Activated T-helper 2 cell treated with anti-CD3 and anti-CD28 coated beads, Interferon-gamma antibody, Interleukin-2, Interleukin-4, amounts not matched to agents 10 μg/mL and 5 μg/mL and 100 μg/mL, durations not matched to agents 14 hours and 24 hours and 36 hours (primary cell): ENCODE measurements at regions of chr11 and their contacts with region 1.

Region 1: GRCh38 chr11:73376160-73376802 is at the start of gene RELT:
- DNase-seq: peak; percentile 93
- H3K4me3 Mint-ChIP-seq: peak within 1 kb of the TSS; percentile 89
- H3K27ac Mint-ChIP-seq: peak within 1 kb of the TSS; percentile 90
- H3K4me1 Mint-ChIP-seq: peaks cover 35% of the 10 kb centered on the region
- H3K27me3 Mint-ChIP-seq: no peaks in the 10 kb centered on the region
- total RNA-seq, gene RELT: 33.5 and 34.5 TPM in 2 replicates

Region 2: GRCh38 chr11:73173755-73174494 is 202.4 kb before region 1 on chr11:
- intact Hi-C with region 1: no loop called
- DNase-seq: no peak
- H3K4me3 Mint-ChIP-seq: no peak overlapping the region
- H3K27ac Mint-ChIP-seq: no peak overlapping the region
- H3K4me1 Mint-ChIP-seq: peaks cover 13% of the 10 kb centered on the region
- H3K27me3 Mint-ChIP-seq: peaks cover 5% of the 10 kb centered on the region

Region 3: DNA sequence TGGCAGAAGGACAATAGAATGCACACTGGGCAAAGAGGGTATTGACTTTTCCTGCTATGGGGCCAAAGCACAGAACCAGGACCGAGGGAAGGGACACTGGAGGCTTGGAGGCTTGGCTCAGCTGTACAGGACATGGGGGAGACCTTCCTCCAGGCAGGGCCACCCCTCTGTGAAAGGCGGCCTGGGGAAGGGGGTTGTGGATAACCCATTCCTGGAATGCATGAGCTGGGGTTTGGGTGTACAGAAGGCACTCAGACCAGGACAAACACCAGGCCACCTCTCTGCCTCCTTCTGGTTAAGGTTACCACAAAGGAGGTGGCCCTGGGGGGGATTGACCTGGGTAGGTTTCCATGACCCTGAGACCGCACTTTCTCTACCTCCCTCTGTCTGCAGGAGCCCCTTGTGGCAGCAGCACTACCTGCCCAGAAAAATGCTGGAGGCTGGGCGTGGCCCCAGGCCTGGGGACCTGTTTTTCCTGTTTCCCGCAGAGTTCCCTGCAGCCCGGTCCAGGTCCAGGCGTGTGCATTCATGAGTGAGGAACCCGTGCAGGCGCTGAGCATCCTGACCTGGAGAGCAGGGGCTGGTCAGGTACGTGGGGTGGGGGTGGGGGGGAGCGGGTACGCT is 148.6 kb before region 1 on chr11:
- intact Hi-C with region 1: no loop called
- DNase-seq: no peak
- H3K4me3 Mint-ChIP-seq: no peak overlapping the region
- H3K27ac Mint-ChIP-seq: no peak overlapping the region
- H3K4me1 Mint-ChIP-seq: peaks cover 3% of the 10 kb centered on the region
- H3K27me3 Mint-ChIP-seq: peaks cover 8% of the 10 kb centered on the region

Region 4: DNA sequence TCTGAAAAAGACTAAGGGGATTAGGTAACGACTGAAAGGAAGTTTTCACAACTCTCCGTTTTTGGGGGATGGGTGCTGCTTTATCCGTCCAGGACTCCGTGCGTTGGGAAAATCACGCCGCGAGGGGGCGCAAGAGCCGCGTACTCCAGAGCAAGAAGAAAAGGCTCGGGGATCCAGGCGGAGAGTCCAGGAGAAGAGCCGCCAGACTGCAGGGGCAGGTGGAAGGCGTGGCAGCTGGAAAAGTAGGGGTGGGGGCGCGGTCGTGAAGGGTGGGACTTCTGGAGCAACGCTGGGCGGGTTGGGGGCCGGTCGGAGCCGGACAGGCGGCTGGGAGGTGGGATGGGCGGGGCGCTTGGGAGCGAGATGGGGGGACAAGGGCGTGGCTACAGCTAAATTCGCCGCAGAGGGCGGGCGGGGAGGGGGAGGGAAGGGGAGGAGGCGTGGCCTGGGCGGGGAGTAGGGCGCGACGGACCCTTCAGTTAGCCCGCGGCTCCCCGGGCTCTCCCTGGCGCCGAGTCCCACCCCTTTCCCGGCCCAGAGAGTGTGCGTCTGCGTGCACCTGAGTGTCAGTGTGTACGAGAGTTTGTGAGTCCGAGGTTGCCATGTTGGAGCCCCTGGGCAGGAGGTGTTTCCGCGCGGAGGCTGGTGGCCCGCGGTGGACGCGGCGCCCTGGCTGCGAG is 68.8 kb before region 1 on chr11:
- intact Hi-C with region 1: loop called (anchors 5 kb)
- DNase-seq: peak; percentile 80
- H3K4me3 Mint-ChIP-seq: peak overlapping the region; percentile 86
- H3K27ac Mint-ChIP-seq: no peak overlapping the region
- H3K4me1 Mint-ChIP-seq: peaks cover 6% of the 10 kb centered on the region
- H3K27me3 Mint-ChIP-seq: peaks cover 47% of the 10 kb centered on the region

Region 5: DNA sequence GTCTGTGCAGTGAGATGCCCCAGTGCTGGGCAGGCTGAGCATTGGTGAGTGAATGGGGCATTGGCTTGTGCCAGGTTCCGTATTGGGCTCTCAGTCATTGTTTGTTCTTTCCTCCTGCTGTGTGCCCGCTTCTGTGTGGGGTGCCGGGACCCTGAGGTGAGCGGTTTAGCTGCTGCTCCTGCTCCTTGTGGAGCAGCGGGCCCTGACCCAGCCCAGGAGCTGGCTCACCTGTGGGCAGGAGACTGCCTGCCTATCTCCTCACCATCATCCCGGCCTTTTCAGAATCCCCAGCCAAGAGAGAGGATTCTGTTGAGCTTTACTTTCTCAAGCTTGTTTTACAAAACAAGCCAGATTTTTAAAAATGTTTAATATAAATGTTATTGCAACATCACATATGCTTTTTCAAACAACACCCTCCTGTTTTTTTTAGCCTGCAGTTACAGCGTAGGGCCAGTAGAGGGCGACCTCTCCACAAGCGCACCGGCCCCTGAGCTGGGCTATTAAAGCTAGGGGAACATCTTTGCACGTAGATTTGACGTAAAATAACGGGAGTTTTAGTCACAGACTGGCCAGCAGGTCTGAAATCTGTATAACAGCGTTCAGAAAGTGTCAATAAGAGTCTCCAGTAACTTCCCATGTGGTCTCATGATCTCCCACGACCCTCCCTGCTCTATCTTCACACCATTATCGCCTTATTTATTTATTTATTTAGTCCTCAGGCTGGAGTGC is 25.2 kb before region 1 on chr11:
- intact Hi-C with region 1: loop called (anchors 1 kb)
- DNase-seq: peak; percentile 60
- H3K4me3 Mint-ChIP-seq: no peak overlapping the region
- H3K27ac Mint-ChIP-seq: no peak overlapping the region
- H3K4me1 Mint-ChIP-seq: peaks cover 35% of the 10 kb centered on the region
- H3K27me3 Mint-ChIP-seq: peaks cover 4% of the 10 kb centered on the region

Region 6: GRCh38 chr11:73393479-73394380 is 17.4 kb after region 1 on chr11:
- intact Hi-C with region 1: no loop called
- DNase-seq: peak; percentile 52
- H3K4me3 Mint-ChIP-seq: no peak overlapping the region
- H3K27ac Mint-ChIP-seq: no peak overlapping the region
- H3K4me1 Mint-ChIP-seq: peaks cover 2% of the 10 kb centered on the region
- H3K27me3 Mint-ChIP-seq: no peaks in the 10 kb centered on the region

Region 7: GRCh38 chr11:73760679-73761402 is 384.6 kb after region 1 on chr11 and contains the start of gene RAB6A:
- intact Hi-C with region 1: loop called (anchors 1 kb)
- DNase-seq: peak; percentile 100
- H3K4me3 Mint-ChIP-seq: peak within 1 kb of the TSS; percentile 93
- H3K27ac Mint-ChIP-seq: peak within 1 kb of the TSS; percentile 95
- H3K4me1 Mint-ChIP-seq: peaks cover 26% of the 10 kb centered on the region
- H3K27me3 Mint-ChIP-seq: peaks cover 5% of the 10 kb centered on the region
- total RNA-seq, gene RAB6A: 74.6 and 89.5 TPM in 2 replicates